HepG2 (cell line): ENCODE measurements at regions of chrX and their contacts with region 1.

Region 1: GRCh38 chrX:13658602-13659001 is 5.7 kb downstream of the TCEANC start:
- DNase-seq: peak; percentile 34
- ATAC-seq: no peak
- H3K4me3 ChIP-seq: peak overlapping the region in 1 of 3 experiments; percentile 21; a peak in 1 of 6 replicates
- H3K27ac ChIP-seq: no peak overlapping the region
- H3K4me1 ChIP-seq: peaks cover 12% of the 10 kb centered on the region
- H3K27me3 ChIP-seq: no peaks in the 10 kb centered on the region
- CTCF ChIP-seq: peak; percentile 65
- EP300 ChIP-seq: no peak
- POLR2A ChIP-seq: no peak
- RAD21 ChIP-seq: no peak

Region 2: GRCh38 chrX:12988797-12989196 is 669.8 kb before region 1 on chrX:
- CTCF ChIA-PET with region 1: no interaction called
- POLR2A ChIA-PET with region 1: no interaction called
- in situ Hi-C with region 1: no loop called
- intact Hi-C with region 1: no loop called
- DNase-seq: peak; percentile 73
- ATAC-seq: peak; percentile 69
- H3K4me3 ChIP-seq: no peak overlapping the region
- H3K27ac ChIP-seq: no peak overlapping the region
- H3K4me1 ChIP-seq: peaks cover 9% of the 10 kb centered on the region
- H3K27me3 ChIP-seq: no peaks in the 10 kb centered on the region
- CTCF ChIP-seq: no peak
- EP300 ChIP-seq: no peak
- POLR2A ChIP-seq: no peak
- RAD21 ChIP-seq: no peak

Region 3: GRCh38 chrX:13688958-13689740 is 30.5 kb after region 1 on chrX and contains the start of gene RAB9A:
- CTCF ChIA-PET with region 1: no interaction called
- POLR2A ChIA-PET with region 1: no interaction called
- in situ Hi-C with region 1: no loop called
- intact Hi-C with region 1: loop called (anchors 2 kb)
- DNase-seq: peak; percentile 33
- ATAC-seq: peak; percentile 96
- H3K4me3 ChIP-seq: peak within 1 kb of the TSS; percentile 68 to 88 (median 80)
- H3K27ac ChIP-seq: peak within 1 kb of the TSS; percentile 80
- H3K4me1 ChIP-seq: peaks cover 38% of the 10 kb centered on the region
- H3K27me3 ChIP-seq: no peaks in the 10 kb centered on the region
- CTCF ChIP-seq: no peak
- EP300 ChIP-seq: no peak
- POLR2A ChIP-seq: peak; percentile 54 to 91; a peak in 3 of 4 replicates
- RAD21 ChIP-seq: no peak
- total RNA-seq, gene RAB9A: 23.1 and 31.2 TPM in 2 replicates

Region 4: GRCh38 chrX:13750204-13750603 is 91.6 kb after region 1 on chrX:
- CTCF ChIA-PET with region 1: interaction called, 8 read pairs
- POLR2A ChIA-PET with region 1: no interaction called
- in situ Hi-C with region 1: no loop called
- intact Hi-C with region 1: loop called (anchors 2 kb)
- DNase-seq: peak; percentile 16
- ATAC-seq: peak; percentile 62
- H3K4me3 ChIP-seq: no peak overlapping the region
- H3K27ac ChIP-seq: no peak overlapping the region
- H3K4me1 ChIP-seq: no peaks in the 10 kb centered on the region
- H3K27me3 ChIP-seq: no peaks in the 10 kb centered on the region
- CTCF ChIP-seq: peak; percentile 52
- EP300 ChIP-seq: no peak
- POLR2A ChIP-seq: no peak
- RAD21 ChIP-seq: no peak